ENCODE measurements at regions of chr5 and their contacts with region 1.

Region 1: DNA sequence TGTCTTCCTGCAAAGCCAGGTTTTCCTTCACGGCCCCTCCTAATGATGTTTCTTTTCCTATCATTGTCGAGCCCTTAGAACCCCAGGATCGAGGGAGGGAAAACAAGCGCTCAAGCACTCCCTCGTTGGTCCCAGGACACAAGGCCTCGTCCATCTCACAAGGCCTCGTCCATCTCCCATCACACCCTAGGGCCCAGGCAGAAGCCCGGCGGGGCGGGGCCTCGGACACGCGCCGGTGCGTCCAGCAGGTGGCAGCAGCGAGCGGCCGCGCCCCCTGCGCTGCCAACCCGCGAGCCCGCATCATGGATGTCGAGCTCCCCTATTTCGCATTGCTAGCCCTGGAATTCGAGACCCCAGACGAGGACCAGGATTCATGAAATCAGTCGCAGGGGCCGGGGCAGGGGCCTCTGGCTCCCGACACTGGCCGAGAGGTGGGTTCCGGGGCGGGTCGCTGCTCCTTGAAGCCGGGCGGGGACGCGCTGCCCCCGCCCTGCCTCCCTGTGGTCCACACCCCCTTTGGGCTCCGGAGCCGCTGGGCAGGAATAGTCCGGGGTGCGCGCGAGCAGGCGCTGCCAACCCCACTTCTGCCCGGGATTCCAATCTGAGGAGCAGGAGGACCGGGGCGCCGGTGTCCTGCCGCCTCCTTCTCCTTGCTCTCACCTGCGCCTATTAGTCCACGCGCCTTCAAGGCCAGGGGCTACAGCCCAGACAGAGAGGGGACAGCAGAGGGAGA is at the start of gene ABLIM3:
- DNase-seq: no peak
- H3K4me3 ChIP-seq: peak within 1 kb of the TSS; percentile 73
- H3K27me3 ChIP-seq: no peaks in the 10 kb centered on the region
- CTCF ChIP-seq: peak; percentile 65
- polyA plus RNA-seq, gene ABLIM3: 14.0 and 25.7 TPM in 2 replicates

Region 2: GRCh38 chr5:148620696-148621095 is 520.7 kb before region 1 on chr5:
- CTCF ChIA-PET with region 1: no interaction called
- POLR2A ChIA-PET with region 1: no interaction called
- DNase-seq: no peak
- H3K4me3 ChIP-seq: no peak overlapping the region
- H3K27me3 ChIP-seq: no peaks in the 10 kb centered on the region
- CTCF ChIP-seq: no peak

Region 3: GRCh38 chr5:149123160-149123559 is 18.2 kb before region 1 on chr5:
- CTCF ChIA-PET with region 1: no interaction called
- POLR2A ChIA-PET with region 1: interaction called, 13 read pairs
- DNase-seq: no peak
- H3K4me3 ChIP-seq: no peak overlapping the region
- H3K27me3 ChIP-seq: peaks cover 5% of the 10 kb centered on the region
- CTCF ChIP-seq: no peak

Region 4: GRCh38 chr5:149153751-149154610 is 12.6 kb after region 1 on chr5:
- CTCF ChIA-PET with region 1: interaction called, 41 read pairs
- POLR2A ChIA-PET with region 1: no interaction called
- DNase-seq: no peak
- H3K4me3 ChIP-seq: no peak overlapping the region
- H3K27me3 ChIP-seq: no peaks in the 10 kb centered on the region
- CTCF ChIP-seq: no peak

Region 5: GRCh38 chr5:149212198-149212951 is 71.0 kb after region 1 on chr5:
- CTCF ChIA-PET with region 1: interaction called, 13 read pairs
- POLR2A ChIA-PET with region 1: interaction called, 4 read pairs
- DNase-seq: peak; percentile 99
- H3K4me3 ChIP-seq: no peak overlapping the region
- H3K27me3 ChIP-seq: no peaks in the 10 kb centered on the region
- CTCF ChIP-seq: no peak

Region 6: GRCh38 chr5:149228618-149229297 is 87.4 kb after region 1 on chr5:
- CTCF ChIA-PET with region 1: interaction called, 339 read pairs
- POLR2A ChIA-PET with region 1: no interaction called
- DNase-seq: peak; percentile 52
- H3K4me3 ChIP-seq: no peak overlapping the region
- H3K27me3 ChIP-seq: no peaks in the 10 kb centered on the region
- CTCF ChIP-seq: peak; percentile 83

Region 7: DNA sequence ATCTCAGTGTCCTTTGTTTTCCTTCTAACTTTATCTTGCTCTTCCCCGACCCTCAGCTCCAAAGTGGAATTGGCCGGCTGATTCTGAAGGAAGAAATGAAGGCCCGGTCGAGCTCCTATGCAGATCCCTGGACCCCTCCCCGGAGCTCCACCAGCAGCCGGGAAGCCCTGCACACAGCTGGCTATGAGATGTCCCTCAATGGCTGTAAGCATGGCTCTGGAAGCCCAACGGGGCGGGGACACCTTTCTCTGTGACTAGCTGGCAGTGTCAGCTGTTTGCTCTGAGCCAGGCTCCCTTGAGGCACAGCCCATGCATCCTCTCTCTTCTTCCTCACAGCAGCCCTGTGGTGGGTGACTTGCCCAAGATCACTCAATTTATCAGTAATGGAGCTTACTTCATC is 106.3 kb after region 1 on chr5:
- CTCF ChIA-PET with region 1: interaction called, 11 read pairs
- POLR2A ChIA-PET with region 1: no interaction called
- DNase-seq: no peak
- H3K4me3 ChIP-seq: no peak overlapping the region
- H3K27me3 ChIP-seq: no peaks in the 10 kb centered on the region
- CTCF ChIP-seq: no peak

Measured in BJ (cell line).